ENCODE measurements at regions of chr16 and their contacts with region 1.

Region 1: DNA sequence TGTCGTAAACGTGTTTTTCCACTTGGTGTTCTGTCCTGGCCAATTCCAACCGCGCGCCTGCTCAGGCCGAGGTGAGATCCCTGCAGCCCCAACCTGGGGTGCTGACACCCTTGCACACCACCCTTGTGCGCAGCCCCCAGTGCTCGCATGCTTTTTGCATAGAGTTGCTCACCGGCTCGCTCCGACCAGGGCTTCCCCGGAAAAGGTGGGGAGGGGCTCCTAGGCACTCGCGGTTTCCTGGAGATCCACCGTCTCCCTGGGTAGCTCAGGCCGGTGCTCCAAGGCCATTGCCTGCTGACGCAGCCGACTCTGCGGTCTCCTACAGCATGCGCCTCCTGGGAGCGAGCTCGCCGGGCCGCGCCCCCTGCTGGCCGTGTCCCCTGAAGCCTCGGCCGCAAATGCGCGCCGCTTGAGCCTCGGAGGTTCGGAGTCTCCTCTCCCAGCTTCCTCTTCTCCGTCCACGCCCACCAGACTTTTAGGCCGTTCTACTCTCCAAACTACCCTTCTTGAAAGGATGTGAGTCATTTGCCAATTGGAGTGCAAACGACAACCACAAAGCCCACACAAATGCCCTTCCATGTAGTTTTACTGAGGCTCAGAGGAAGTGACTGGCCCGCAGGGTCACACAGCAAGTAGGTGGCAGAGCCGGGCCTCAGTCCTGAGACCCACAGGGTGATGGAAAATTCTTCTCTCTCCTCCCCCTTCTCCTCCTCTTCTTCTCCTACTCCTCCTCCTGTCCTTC is 7.2 kb upstream of the PDP2 start:
- DNase-seq: peak; percentile 89
- H3K4me3 ChIP-seq: peak overlapping the region; percentile 12 to 59
- H3K27ac ChIP-seq: peak overlapping the region in 1 of 2 experiments; percentile 55; a peak in 1 of 4 replicates
- H3K4me1 ChIP-seq: peaks cover 3 to 5% of the 10 kb centered on the region in 2 experiments; a peak in 3 of 4 replicates
- H3K27me3 ChIP-seq: no peaks in the 10 kb centered on the region
- CTCF ChIP-seq: peak; percentile 97
- EP300 ChIP-seq: peak in 1 of 2 experiments; percentile 45; a peak in 1 of 4 replicates
- RAD21 ChIP-seq: peak; percentile 54

Region 2: GRCh38 chr16:65975049-65976009 is 897.8 kb before region 1 on chr16:
- CTCF ChIA-PET with region 1: no interaction called
- POLR2A ChIA-PET with region 1: no interaction called
- DNase-seq: no peak
- H3K4me3 ChIP-seq: no peak overlapping the region
- H3K27ac ChIP-seq: no peak overlapping the region
- H3K4me1 ChIP-seq: no peaks in the 10 kb centered on the region
- H3K27me3 ChIP-seq: no peaks in the 10 kb centered on the region
- CTCF ChIP-seq: no peak
- EP300 ChIP-seq: no peak
- RAD21 ChIP-seq: no peak

Region 3: DNA sequence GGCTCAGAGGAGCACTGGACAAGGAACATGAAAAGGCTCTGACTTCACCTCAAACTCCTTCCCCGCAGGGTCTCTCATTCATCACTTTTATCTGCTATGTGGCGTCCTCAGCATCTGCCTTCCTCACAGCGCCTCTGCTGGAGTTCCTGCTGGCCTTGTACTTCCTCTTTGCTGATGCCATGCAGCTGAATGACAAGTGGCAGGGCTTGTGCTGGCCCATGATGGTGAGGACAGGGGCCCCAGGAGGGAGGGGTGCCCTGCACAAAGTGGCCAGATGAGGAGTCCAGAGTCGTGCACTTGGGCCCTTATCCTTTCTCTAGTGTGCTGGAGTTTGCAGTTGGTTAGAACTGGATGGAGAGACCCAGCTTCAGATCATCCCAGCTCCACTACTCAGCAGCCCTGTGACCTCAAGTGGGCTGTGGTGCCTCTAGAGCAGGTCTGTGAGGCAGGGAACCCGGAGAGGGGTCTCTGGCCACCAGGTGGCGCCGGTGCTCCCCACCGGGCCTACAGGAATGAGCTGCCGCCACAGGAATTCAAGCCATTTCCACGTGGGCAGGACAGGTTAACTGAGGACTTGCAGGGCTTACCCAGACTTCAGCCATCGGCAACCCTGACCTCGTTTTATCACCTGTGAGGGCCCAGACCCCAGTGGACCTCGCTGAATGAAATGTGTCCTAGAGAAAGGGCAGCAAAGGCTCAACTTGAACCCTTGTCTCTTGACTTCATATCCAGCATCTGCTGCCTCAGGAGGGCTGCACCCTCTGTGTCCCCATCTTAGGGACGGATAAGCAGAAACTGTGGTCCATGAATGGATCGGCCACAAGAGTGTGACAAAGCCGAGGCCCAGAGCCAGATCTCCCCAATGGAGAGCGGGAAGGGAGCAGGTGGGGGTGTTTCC is 264.6 kb before region 1 on chr16:
- CTCF ChIA-PET with region 1: interaction called, 68 read pairs
- POLR2A ChIA-PET with region 1: no interaction called
- DNase-seq: peak; percentile 94
- H3K4me3 ChIP-seq: no peak overlapping the region; a peak in 1 of 4 replicates
- H3K27ac ChIP-seq: peak overlapping the region; percentile 36 to 38; a peak in 3 of 4 replicates
- H3K4me1 ChIP-seq: peaks cover 7 to 19% of the 10 kb centered on the region in 2 experiments; a peak in 3 of 4 replicates
- H3K27me3 ChIP-seq: no peaks in the 10 kb centered on the region
- CTCF ChIP-seq: peak; percentile 94
- EP300 ChIP-seq: no peak
- RAD21 ChIP-seq: peak; percentile 72

Region 4: DNA sequence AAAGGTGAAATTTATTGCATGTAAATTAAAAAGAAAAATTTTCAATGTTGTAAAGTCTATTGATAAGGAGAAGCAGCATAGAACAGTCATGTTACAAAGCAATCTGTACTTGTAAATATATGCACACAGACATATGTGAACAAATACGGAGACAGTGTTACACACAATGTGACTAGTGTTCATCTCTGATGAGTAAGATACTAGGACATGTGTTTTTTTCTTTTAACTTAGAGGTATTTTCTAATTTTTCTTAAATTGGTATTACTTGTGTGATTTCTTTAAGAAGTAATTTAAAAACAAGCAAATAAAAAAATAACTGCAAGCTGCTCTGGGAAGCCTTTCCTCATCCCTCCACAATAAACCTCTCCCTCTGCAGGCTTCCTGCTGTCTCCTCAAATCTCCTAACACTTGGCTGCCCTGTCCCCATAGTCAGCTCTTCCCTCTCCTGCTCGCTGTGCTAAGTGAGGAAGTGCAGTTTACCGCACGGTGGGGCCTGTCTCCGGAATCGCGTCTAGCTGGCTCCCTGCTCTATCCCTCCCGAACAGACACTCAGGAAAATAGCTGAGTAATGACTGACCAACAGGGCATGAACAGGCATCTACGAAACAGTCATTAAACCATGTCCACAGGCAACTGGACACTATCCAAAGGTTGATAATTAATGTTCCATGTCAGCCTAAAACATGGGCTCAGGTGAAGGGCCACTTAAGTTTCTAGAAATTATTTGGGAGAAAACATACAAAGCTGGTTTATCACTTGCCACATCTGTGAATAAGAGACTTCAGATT is 212.5 kb before region 1 on chr16:
- CTCF ChIA-PET with region 1: interaction called, 31 read pairs
- POLR2A ChIA-PET with region 1: no interaction called
- DNase-seq: peak; percentile 72
- H3K4me3 ChIP-seq: peak overlapping the region in 1 of 2 experiments; percentile 8; a peak in 2 of 4 replicates
- H3K27ac ChIP-seq: peak overlapping the region; percentile 88 to 89
- H3K4me1 ChIP-seq: peaks cover 20 to 26% of the 10 kb centered on the region in 2 experiments
- H3K27me3 ChIP-seq: no peaks in the 10 kb centered on the region
- CTCF ChIP-seq: peak; percentile 48
- EP300 ChIP-seq: peak in 1 of 2 experiments; percentile 22; a peak in 3 of 4 replicates
- RAD21 ChIP-seq: peak; percentile 27; the same call in 1 of the 2 replicates

Region 5: GRCh38 chr16:66751303-66751991 is 121.7 kb before region 1 on chr16 and contains the start of gene DYNC1LI2:
- CTCF ChIA-PET with region 1: interaction called, 20 read pairs
- POLR2A ChIA-PET with region 1: interaction called, 4 read pairs
- DNase-seq: peak; percentile 98
- H3K4me3 ChIP-seq: peak within 1 kb of the TSS; percentile 87 to 91
- H3K27ac ChIP-seq: peak within 1 kb of the TSS; percentile 75 to 92
- H3K4me1 ChIP-seq: peaks cover 15 to 17% of the 10 kb centered on the region in 2 experiments; a peak in 2 of 4 replicates
- H3K27me3 ChIP-seq: no peaks in the 10 kb centered on the region
- CTCF ChIP-seq: peak; percentile 65
- EP300 ChIP-seq: 0 out of 4 replicates have a peak, but pooled peaks of 1 of the 2 experiments have one; percentile 6
- RAD21 ChIP-seq: peak; percentile 40; the same call in 1 of the 2 replicates
- polyA plus RNA-seq, gene DYNC1LI2: 33.1 and 49.6 TPM in 2 replicates

Region 6: DNA sequence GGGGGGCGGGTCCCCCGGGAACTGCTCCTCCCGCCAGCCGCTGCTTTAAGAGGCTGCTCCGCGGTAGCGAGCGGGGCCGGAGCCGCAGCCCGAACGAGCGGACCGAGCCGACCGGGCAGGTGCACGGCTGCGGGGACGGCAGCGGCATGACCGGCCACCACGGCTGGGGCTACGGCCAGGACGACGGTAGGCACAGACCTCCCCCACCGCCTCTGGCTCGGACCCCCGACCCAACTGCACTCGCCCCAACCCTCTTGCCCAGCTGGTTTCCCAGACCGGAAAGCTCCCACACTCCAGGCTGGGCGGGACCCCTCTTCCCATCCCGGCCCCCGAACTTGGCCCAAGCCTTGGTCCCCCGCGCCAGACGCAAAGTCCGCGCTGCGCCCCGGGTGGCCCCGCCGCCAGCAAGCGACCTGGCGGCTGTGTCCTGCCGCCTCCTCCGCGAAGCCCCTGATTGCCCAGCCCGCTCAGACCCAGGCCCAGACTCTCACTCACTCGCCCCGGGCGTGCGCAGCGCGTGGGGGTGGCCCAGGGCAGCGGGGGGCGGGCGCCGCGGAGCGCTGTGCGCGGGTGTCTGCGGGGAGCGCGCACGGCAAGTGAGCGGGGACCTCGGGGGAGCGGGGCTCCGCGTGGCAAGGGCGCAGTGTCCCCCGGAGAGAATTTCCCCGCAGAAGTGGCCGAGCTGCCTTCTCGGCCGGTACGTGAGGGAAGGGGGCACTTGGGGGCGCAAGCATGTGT is 28.6 kb before region 1 on chr16 and contains the start of gene CA7:
- CTCF ChIA-PET with region 1: interaction called, 68 read pairs
- POLR2A ChIA-PET with region 1: no interaction called
- DNase-seq: peak; percentile 75
- H3K4me3 ChIP-seq: peak within 1 kb of the TSS; percentile 47 to 53
- H3K27ac ChIP-seq: no peak within 1 kb of the TSS
- H3K4me1 ChIP-seq: peaks cover 0 to 8% of the 10 kb centered on the region in 2 experiments; a peak in 1 of 4 replicates
- H3K27me3 ChIP-seq: peaks cover 15% of the 10 kb centered on the region; the same call in 1 of the 2 replicates
- CTCF ChIP-seq: no peak
- EP300 ChIP-seq: no peak
- RAD21 ChIP-seq: no peak
- polyA plus RNA-seq, gene CA7: 0.11 and 0.12 TPM in 2 replicates

Measured in SK-N-SH (cell line).